ENCODE measurements at regions of chr6 and their contacts with region 1.

Region 1: DNA sequence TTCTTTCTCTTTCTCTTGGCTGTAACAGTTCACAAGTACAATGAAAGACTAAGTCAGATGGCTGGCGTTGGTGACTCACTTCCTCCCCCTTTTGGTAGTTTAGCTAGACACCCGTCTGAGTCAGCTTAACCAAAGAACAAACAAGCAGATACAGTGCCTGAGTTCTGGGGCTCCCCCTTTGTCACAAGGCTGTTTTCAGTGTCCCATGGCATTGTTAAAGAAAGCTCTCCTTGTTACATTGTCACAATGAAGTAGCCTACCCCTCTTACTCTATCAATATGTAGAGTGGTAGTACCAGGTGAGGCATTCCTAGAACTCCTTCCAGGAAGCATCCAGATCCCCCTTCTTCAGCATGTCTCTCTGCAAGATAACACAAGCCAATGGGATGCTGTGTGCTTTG is 38.6 kb downstream of the KIAA0408 start:
- DNase-seq: peak; percentile 92
- H3K4me3 Mint-ChIP-seq: no peak overlapping the region
- H3K27ac Mint-ChIP-seq: peak overlapping the region; percentile 68
- H3K4me1 Mint-ChIP-seq: peaks cover 26% of the 10 kb centered on the region
- H3K27me3 Mint-ChIP-seq: no peaks in the 10 kb centered on the region

Region 2: DNA sequence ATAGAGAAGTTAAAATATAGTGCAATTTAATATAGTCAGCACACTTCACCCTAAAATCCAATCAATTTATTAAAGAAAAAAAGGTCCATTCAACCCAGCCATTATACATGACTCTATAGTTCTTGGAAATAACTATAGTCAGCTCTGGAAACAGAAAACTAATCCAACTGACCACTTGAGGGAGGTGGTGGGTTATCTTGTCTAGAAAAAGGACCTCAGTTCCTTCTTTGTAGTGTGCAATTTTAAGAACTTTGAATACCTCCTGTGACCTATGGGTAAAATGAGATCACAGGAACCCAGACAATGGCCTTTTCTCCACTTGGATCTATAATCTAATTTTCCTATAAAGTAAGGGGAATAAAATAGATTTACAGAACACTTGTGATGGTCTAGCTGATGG is 1244.3 kb before region 1 on chr6:
- CTCF ChIA-PET with region 1: no interaction called
- intact Hi-C with region 1: loop called (anchors 10 kb)
- DNase-seq: no peak
- H3K4me3 Mint-ChIP-seq: no peak overlapping the region
- H3K27ac Mint-ChIP-seq: no peak overlapping the region
- H3K4me1 Mint-ChIP-seq: peaks cover 2% of the 10 kb centered on the region
- H3K27me3 Mint-ChIP-seq: no peaks in the 10 kb centered on the region

Region 3: DNA sequence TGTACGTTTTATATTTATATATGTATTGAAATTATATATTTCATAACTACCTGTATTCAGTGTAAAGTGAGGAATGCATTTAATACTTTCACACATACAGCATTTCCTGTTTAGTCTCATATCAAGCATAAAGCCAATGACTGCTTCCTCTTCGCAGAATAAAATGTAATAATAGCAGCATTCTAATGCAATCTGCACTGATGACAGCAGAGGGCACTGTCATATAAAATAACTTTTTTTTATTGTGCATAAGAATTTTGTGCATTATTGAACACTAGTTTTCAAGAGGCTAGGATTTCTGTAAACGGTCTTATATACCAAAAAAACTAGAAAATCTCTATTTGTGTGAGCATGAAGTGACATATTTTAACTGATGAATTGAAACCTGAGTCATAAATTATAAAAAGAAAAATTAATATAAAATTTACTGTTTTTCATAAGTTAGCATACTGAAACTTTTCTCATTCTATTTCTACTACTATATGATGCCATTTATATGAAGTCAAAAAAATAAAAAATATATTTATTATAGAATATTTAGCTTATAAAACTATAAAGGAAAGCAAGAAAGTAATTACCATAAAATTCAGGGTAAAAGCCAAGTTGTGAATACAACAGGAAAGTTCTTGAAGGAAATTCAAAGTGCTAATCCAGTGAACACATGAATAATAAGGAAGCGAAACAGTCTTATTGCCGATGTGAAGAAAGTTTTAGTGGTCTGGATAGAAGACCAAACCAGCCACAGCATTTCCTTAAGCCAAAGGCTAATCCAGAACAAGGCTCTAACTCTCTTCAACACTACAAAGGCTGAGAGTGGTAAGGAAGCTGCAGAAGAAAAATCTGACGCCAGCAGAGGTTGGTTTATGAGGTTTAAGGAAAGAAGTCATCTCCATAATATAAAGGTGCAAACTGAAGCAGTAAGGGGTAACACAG is 117.6 kb before region 1 on chr6:
- CTCF ChIA-PET with region 1: interaction called, 8 read pairs
- intact Hi-C with region 1: loop called (anchors 1 kb)
- DNase-seq: peak; percentile 72
- H3K4me3 Mint-ChIP-seq: no peak overlapping the region
- H3K27ac Mint-ChIP-seq: no peak overlapping the region
- H3K4me1 Mint-ChIP-seq: peaks cover 42% of the 10 kb centered on the region
- H3K27me3 Mint-ChIP-seq: no peaks in the 10 kb centered on the region

Region 4: DNA sequence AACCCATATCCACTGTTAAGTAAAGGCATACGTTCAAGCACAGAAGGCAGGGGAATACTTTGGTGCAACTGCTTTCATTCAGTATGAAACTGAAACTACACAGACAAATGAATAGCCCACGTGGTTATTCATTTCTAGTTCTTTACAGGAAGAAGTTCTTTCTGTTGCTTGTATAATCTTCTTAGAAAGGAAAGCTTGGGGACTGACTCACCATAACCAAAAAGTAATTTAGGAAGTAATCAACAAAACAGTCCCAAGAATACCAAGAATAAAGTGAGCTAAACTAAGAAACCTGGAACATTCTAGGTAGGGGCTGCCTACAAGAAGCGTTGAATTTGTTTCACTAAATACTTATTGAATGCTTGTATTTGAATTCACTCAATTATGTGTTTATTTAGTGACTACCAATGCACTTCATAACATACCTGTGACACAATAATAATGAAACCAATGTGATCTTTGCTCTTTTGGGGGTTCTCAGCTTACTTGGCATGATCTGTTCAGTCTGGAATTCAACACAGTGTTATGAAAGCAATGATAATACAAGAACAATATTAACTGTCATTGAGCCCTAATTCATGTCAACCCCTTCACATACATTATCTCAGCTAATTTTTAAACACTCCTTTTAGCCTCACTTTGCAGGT is 63.8 kb after region 1 on chr6:
- CTCF ChIA-PET with region 1: interaction called, 3 read pairs
- intact Hi-C with region 1: loop called (anchors 1 kb)
- DNase-seq: peak; percentile 11
- H3K4me3 Mint-ChIP-seq: no peak overlapping the region
- H3K27ac Mint-ChIP-seq: no peak overlapping the region
- H3K4me1 Mint-ChIP-seq: peaks cover 28% of the 10 kb centered on the region
- H3K27me3 Mint-ChIP-seq: peaks cover 4% of the 10 kb centered on the region

Region 5: DNA sequence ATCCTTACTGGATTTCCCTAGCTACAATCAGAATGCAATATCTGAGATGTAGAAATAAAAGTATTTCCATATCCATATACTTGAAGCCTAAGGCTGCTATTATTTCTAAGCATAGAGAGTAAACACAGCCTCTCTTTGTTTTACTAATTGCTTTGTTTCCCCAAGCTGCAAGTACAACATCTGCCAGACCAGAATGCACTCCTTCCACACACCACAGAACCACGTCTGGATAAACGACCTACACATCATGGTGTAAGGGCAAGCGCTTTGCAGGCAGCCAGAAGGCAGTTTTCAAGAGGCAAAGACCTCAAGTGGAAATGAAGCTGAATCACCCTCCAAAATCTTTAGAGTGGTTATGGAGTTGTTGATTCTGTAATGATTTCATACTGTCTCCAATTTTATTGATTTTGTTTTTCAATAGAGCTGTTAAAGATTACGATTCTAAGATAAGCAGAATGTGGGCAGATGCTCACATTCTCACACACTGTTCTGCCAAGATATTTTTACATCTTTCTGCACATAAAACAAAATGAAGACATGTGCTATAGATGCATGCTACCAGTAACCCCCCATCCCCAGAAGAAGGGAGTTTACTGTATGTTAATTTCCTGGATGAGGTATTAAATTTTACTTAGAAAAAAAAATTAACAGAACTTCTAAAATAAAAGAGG is 391.5 kb after region 1 on chr6:
- CTCF ChIA-PET with region 1: no interaction called
- intact Hi-C with region 1: loop called (anchors 10 kb)
- DNase-seq: peak; percentile 30
- H3K4me3 Mint-ChIP-seq: peak overlapping the region; percentile 50
- H3K27ac Mint-ChIP-seq: peak overlapping the region; percentile 42
- H3K4me1 Mint-ChIP-seq: peaks cover 90% of the 10 kb centered on the region
- H3K27me3 Mint-ChIP-seq: no peaks in the 10 kb centered on the region

Measured in activated naive CD4-positive, alpha-beta T cell treated with anti-CD3 and anti-CD28 coated beads for 36 hours (primary cell).